CD8-positive, alpha-beta T cell (primary cell): ENCODE measurements at regions of chr1 and their contacts with region 1.

Region 1: GRCh38 chr1:183281553-183282091 is 95.6 kb downstream of the LAMC2 start:
- DNase-seq: peak; percentile 38 to 77 (median 60)
- ATAC-seq: peak; percentile 55
- H3K4me3 ChIP-seq: no peak overlapping the region
- H3K4me3 Mint-ChIP-seq: no peak overlapping the region
- H3K27ac ChIP-seq: no peak overlapping the region
- H3K27ac Mint-ChIP-seq: no peak overlapping the region
- H3K4me1 ChIP-seq: no peaks in the 10 kb centered on the region
- H3K4me1 Mint-ChIP-seq: no peaks in the 10 kb centered on the region
- H3K27me3 ChIP-seq: no peaks in the 10 kb centered on the region
- H3K27me3 Mint-ChIP-seq: peaks cover 7% of the 10 kb centered on the region
- CTCF ChIP-seq: peak; percentile 67

Region 2: DNA sequence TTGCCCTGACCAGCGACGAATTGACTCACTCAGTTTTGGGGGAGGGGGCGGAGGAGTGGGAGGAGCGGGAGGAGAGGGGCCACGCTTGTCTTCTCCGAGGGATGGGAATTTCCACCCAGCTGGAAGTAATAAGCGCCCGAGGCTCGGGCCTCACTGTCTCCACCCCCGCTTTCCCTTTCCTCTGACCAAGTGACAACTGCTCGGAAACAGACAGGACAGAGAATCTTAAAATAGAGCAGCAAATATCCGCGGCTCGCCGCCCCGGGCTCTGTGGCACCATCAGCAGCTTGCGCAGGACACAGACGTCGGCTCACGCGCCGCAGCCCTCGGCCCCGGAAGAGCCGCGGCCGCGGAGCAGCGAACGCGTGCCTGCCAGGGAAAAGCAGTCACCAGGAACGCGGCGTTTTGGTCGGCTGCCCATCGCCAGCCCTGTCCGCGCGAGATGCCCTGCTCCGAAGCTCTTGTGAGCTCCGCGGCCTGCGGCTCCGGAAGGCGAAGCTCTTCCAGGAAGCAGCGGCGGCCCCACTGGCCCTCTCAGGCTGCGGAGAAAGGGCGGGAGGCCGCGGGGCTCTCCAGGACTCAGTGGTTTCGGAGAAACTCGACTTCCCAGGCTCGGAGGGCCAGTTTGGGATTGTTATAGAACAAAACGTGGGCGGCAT is 666.7 kb before region 1 on chr1:
- CTCF ChIA-PET with region 1: no interaction called
- POLR2A ChIA-PET with region 1: no interaction called
- intact Hi-C with region 1: no loop called
- DNase-seq: peak in 6 of 9 experiments; percentile 12 to 70 (median 42)
- ATAC-seq: peak; percentile 3
- H3K4me3 ChIP-seq: peak overlapping the region; percentile 38 to 46
- H3K4me3 Mint-ChIP-seq: peak overlapping the region; percentile 73
- H3K27ac ChIP-seq: no peak overlapping the region
- H3K27ac Mint-ChIP-seq: peak overlapping the region; percentile 91
- H3K4me1 ChIP-seq: peaks cover 32% of the 10 kb centered on the region
- H3K4me1 Mint-ChIP-seq: peaks cover 30% of the 10 kb centered on the region
- H3K27me3 ChIP-seq: peaks cover 19 to 25% of the 10 kb centered on the region in 2 experiments
- H3K27me3 Mint-ChIP-seq: peaks cover 66% of the 10 kb centered on the region
- CTCF ChIP-seq: no peak

Region 3: GRCh38 chr1:183291802-183292514 is 10.3 kb after region 1 on chr1:
- CTCF ChIA-PET with region 1: interaction called, 10 read pairs
- POLR2A ChIA-PET with region 1: no interaction called
- intact Hi-C with region 1: no loop called
- DNase-seq: no peak
- ATAC-seq: no peak
- H3K4me3 ChIP-seq: no peak overlapping the region
- H3K4me3 Mint-ChIP-seq: no peak overlapping the region
- H3K27ac ChIP-seq: no peak overlapping the region
- H3K27ac Mint-ChIP-seq: no peak overlapping the region
- H3K4me1 ChIP-seq: no peaks in the 10 kb centered on the region
- H3K4me1 Mint-ChIP-seq: no peaks in the 10 kb centered on the region
- H3K27me3 ChIP-seq: no peaks in the 10 kb centered on the region
- H3K27me3 Mint-ChIP-seq: peaks cover 4% of the 10 kb centered on the region
- CTCF ChIP-seq: no peak

Region 4: GRCh38 chr1:183622884-183623785 is 341.5 kb after region 1 on chr1:
- CTCF ChIA-PET with region 1: interaction called, 6 read pairs
- POLR2A ChIA-PET with region 1: no interaction called
- intact Hi-C with region 1: loop called in 1 of 2 experiments (anchors 1 kb)
- DNase-seq: peak in 8 of 9 experiments; percentile 13 to 72 (median 52)
- ATAC-seq: peak; percentile 99
- H3K4me3 ChIP-seq: no peak overlapping the region
- H3K4me3 Mint-ChIP-seq: no peak overlapping the region
- H3K27ac ChIP-seq: no peak overlapping the region
- H3K27ac Mint-ChIP-seq: peak overlapping the region; percentile 89
- H3K4me1 ChIP-seq: peaks cover 6% of the 10 kb centered on the region
- H3K4me1 Mint-ChIP-seq: peaks cover 38% of the 10 kb centered on the region
- H3K27me3 ChIP-seq: no peaks in the 10 kb centered on the region
- H3K27me3 Mint-ChIP-seq: no peaks in the 10 kb centered on the region
- CTCF ChIP-seq: peak; percentile 51

Region 5: GRCh38 chr1:183685112-183685713 is 403.6 kb after region 1 on chr1:
- CTCF ChIA-PET with region 1: interaction called, 10 read pairs
- POLR2A ChIA-PET with region 1: no interaction called
- intact Hi-C with region 1: loop called (anchors 1 kb)
- DNase-seq: peak in 3 of 9 experiments; percentile 18 to 69 (median 58)
- ATAC-seq: peak; percentile 83
- H3K4me3 ChIP-seq: no peak overlapping the region
- H3K4me3 Mint-ChIP-seq: no peak overlapping the region
- H3K27ac ChIP-seq: no peak overlapping the region
- H3K27ac Mint-ChIP-seq: no peak overlapping the region
- H3K4me1 ChIP-seq: no peaks in the 10 kb centered on the region
- H3K4me1 Mint-ChIP-seq: peaks cover 4% of the 10 kb centered on the region
- H3K27me3 ChIP-seq: no peaks in the 10 kb centered on the region
- H3K27me3 Mint-ChIP-seq: peaks cover 5% of the 10 kb centered on the region
- CTCF ChIP-seq: peak; percentile 83